Activated T-helper 2 cell treated with anti-CD3 and anti-CD28 coated beads, Interferon-gamma antibody, Interleukin-2, Interleukin-4, amounts not matched to agents 10 μg/mL and 5 μg/mL and 100 μg/mL, durations not matched to agents 14 hours and 24 hours and 36 hours (primary cell): ENCODE measurements at regions of chr12 and their contacts with region 1.

Region 1: DNA sequence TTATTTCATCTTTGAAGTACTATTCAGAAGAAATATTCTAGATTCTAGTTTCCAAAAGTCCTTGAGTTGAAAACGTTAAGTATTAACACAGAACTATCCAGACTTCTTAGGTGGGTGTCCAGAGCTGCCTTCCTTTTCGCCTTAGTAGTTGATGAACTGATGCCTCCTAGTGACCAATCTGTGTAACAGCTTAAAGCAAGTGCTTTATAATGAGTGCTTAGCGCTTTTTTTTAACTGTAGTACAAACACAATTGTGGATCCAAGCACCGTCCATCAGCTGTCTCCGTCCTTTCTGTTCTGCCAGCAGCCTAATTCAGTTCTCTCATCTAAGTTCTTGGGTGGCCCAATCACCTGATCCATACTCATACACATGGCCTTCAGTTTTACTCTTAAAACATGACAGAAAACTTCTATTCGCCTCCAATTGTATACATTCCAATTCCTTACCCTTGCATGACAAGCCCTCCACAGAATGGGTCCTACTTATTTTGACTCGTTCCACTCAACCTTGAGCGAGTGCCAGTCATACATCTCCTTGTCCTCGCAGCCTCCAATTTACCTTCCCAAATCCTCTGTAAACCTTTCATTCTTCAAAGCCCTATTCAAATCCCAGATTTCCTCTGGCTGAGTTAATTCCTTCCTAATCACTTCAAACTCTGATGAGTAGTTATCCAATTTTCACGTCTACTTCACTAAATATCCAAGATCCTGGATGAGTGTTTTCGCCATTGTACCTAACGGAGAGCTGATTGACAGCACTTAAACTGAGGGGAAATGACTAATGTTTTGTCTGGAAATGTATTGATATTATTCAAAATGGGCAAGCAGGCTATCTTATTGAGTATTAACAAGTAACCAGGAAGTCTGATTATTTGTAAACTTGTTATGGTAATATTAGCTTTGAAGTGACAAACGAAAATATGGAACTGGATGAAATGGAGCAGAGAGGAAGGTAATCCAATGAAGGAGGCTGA is 5.8 kb upstream of the PHLDA1 start:
- DNase-seq: no peak
- H3K4me3 Mint-ChIP-seq: no peak overlapping the region
- H3K27ac Mint-ChIP-seq: no peak overlapping the region
- H3K4me1 Mint-ChIP-seq: peaks cover 30% of the 10 kb centered on the region
- H3K27me3 Mint-ChIP-seq: no peaks in the 10 kb centered on the region

Region 2: GRCh38 chr12:75814851-75815754 is 222.3 kb before region 1 on chr12:
- intact Hi-C with region 1: loop called (anchors 1 kb)
- DNase-seq: no peak
- H3K4me3 Mint-ChIP-seq: no peak overlapping the region
- H3K27ac Mint-ChIP-seq: no peak overlapping the region
- H3K4me1 Mint-ChIP-seq: peaks cover 8% of the 10 kb centered on the region
- H3K27me3 Mint-ChIP-seq: peaks cover 9% of the 10 kb centered on the region

Region 3: GRCh38 chr12:75981247-75982168 is 55.9 kb before region 1 on chr12:
- intact Hi-C with region 1: no loop called
- DNase-seq: no peak
- H3K4me3 Mint-ChIP-seq: no peak overlapping the region
- H3K27ac Mint-ChIP-seq: no peak overlapping the region
- H3K4me1 Mint-ChIP-seq: peaks cover 74% of the 10 kb centered on the region
- H3K27me3 Mint-ChIP-seq: no peaks in the 10 kb centered on the region

Region 4: GRCh38 chr12:76455582-76456345 is 418.3 kb after region 1 on chr12:
- intact Hi-C with region 1: loop called (anchors 5 kb)
- DNase-seq: no peak
- H3K4me3 Mint-ChIP-seq: no peak overlapping the region
- H3K27ac Mint-ChIP-seq: no peak overlapping the region
- H3K4me1 Mint-ChIP-seq: peaks cover 8% of the 10 kb centered on the region
- H3K27me3 Mint-ChIP-seq: no peaks in the 10 kb centered on the region